ENCODE measurements at regions of chr10 and their contacts with region 1.

Region 1: DNA sequence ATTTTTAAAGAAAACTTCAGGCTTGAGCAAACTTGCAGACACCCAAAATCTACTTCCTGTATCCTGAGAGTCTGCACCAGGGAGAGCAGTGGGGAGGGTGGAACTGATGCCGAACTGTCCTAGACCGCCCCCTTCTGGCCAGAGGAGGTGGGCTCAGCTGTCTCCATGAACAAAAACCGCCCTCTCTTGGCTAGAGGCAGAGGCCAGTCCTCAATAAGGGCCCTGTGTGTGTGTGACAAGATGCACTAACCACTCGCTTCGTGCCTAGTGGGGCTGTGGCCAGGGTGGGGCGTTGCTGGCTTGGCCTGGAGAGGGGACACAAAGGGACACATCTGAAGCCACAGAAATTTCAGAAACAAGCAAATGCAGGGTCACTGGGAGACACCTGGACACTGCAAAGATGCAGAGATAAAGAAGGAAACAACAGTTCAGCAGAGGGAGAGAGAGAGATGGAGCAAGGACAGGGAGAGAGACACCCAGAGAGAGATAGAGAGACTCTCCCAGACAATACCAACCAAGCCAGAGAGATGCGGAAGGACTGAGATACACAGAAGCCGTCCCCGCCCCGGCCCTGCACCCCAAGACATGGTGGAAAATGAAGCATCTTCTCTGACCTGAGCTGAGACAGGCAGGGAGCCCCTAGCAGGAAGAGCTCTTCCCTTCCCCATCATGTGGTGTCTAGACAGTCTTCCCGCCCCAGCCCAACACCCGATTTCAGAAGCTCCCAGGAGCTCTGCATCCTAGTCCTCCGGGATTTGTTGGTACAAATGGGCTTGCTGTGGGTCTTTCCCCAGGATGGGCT is 22.7 kb upstream of the FXYD4 start:
- DNase-seq: peak; percentile 64 to 85
- H3K4me3 ChIP-seq: no peak overlapping the region
- H3K27ac ChIP-seq: no peak overlapping the region
- H3K4me1 ChIP-seq: peaks cover 39% of the 10 kb centered on the region
- H3K27me3 ChIP-seq: no peaks in the 10 kb centered on the region
- CTCF ChIP-seq: peak; percentile 96

Region 2: DNA sequence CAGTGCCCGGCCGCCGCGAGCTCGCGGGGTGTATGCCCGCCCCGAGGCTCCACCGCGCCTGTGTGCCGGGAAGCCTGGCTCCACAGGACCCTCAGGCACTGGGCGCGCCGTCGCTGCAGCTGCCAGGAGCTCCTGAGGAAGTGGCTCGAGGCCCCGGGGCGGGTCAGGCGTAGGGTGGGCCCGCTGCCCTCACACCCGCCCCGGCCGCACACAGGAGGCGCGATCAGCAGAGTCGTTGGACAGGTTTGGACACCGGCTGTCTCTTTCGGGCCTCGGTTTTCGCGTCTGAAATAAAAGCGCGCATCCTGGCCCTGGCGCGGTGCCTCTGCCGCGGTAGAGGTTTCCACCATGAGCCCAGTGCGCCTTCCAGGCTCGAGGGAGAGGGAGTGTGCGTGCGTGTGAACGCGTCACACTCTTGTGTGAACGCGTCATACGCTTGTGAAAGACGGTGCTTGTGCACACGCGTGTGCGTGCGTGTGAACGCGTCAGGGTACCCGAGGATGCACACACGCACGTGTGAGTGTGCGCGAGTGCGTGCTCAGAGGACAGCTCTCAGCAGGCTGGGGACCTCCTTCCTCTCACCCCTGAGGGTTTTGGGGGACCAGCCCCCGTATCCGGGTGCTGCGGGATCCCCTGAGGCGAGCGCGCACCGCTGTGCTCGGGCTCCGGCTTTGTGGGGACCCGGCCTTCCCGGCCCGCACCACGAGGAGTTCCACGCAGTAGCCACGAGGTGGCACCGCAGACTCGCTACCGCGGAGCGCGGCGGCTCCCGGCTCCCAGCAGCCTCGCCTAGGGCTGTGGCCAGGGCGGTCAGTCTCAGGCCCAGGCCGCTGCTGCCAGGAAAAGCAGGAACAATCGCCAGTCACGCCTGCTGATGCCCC is 482.4 kb before region 1 on chr10:
- CTCF ChIA-PET with region 1: no interaction called
- POLR2A ChIA-PET with region 1: no interaction called
- intact Hi-C with region 1: loop called (anchors 2 kb)
- DNase-seq: peak; percentile 55 to 84
- H3K4me3 ChIP-seq: no peak overlapping the region
- H3K27ac ChIP-seq: no peak overlapping the region
- H3K4me1 ChIP-seq: no peaks in the 10 kb centered on the region
- H3K27me3 ChIP-seq: peaks cover 12% of the 10 kb centered on the region; the same call in 1 of the 2 replicates
- CTCF ChIP-seq: peak; percentile 83

Region 3: DNA sequence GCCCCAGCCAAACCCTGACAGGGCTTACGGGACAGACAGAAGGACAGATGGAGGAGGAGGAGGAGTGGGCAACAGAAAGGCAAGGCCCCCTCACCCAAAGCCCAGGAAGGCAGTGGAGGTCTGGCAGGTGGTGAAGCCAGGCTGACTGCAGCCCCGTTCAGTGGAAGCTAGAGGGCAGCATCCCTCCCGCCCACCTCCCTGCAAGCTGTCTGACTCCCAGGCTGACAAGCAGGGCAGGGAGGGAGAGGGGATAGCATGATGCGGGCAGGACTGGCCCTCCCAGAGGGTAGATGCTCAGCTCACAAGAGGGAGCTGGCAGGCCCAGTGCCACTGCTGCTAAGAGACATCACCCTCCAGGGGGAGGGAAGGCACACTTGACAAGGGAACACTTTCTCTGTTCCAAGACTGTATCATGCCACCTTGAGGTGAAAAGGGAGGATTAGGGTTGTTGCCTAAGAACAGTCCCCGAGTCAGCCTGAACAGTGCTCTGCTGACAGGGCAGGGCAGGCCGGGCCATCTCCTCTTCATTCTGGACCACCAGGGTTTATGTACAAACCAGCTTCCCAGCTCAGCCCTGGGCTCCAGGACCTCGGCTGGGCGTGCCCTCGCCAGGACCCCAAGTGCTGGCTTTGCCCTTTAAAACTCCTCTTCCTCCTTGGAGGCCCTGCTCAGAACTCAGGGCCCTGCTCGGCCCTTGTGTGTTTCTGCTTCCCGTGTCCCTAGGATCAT is 143.6 kb before region 1 on chr10:
- CTCF ChIA-PET with region 1: interaction called, 3 read pairs
- POLR2A ChIA-PET with region 1: no interaction called
- intact Hi-C with region 1: loop called (anchors 1 kb)
- DNase-seq: peak; percentile 50 to 66
- H3K4me3 ChIP-seq: no peak overlapping the region
- H3K27ac ChIP-seq: no peak overlapping the region
- H3K4me1 ChIP-seq: no peaks in the 10 kb centered on the region
- H3K27me3 ChIP-seq: no peaks in the 10 kb centered on the region
- CTCF ChIP-seq: peak; percentile 91

Region 4: GRCh38 chr10:43287056-43288007 is 61.4 kb before region 1 on chr10:
- CTCF ChIA-PET with region 1: no interaction called
- POLR2A ChIA-PET with region 1: interaction called, 8 read pairs
- intact Hi-C with region 1: loop called (anchors 1 kb)
- DNase-seq: peak; percentile 87 to 96
- H3K4me3 ChIP-seq: peak overlapping the region; percentile 20; the same call in 1 of the 2 replicates
- H3K27ac ChIP-seq: peak overlapping the region; percentile 75
- H3K4me1 ChIP-seq: peaks cover 22% of the 10 kb centered on the region
- H3K27me3 ChIP-seq: no peaks in the 10 kb centered on the region; the same call in 1 of the 2 replicates
- CTCF ChIP-seq: no peak

Region 5: DNA sequence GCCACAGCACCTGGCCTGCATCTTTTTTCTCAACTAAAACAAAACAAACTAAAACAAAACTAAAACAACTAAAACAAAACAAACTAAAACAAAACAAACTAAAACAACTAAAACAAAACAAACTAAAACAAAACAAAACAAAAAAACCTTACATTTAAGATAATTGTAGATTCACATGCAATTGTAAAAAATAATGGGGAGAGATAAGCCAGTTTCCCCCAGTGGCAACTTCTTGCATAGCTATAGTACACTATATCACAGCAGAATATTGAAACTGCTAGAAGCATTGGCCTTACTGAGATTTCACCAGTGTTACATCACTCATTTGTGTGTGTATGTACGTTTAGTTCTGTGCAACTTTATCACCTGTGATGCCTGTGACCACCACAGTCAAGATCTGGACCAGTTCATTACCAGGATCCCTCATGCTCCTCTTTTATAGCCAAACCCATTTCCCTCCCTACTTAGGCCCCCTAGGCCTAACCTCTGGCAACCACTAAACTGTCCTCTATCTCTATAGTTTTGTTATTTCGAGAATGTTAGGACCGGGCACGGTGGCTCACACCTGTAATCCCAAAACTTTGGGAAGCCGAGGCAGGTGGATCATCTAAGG is 32.0 kb after region 1 on chr10:
- CTCF ChIA-PET with region 1: interaction called, 8 read pairs
- POLR2A ChIA-PET with region 1: no interaction called
- intact Hi-C with region 1: loop called (anchors 1 kb)
- DNase-seq: peak in 1 of 2 experiments; percentile 39
- H3K4me3 ChIP-seq: no peak overlapping the region
- H3K27ac ChIP-seq: peak overlapping the region; percentile 78
- H3K4me1 ChIP-seq: peaks cover 5% of the 10 kb centered on the region
- H3K27me3 ChIP-seq: no peaks in the 10 kb centered on the region
- CTCF ChIP-seq: peak; percentile 46; the same call in 1 of the 2 replicates

Region 6: DNA sequence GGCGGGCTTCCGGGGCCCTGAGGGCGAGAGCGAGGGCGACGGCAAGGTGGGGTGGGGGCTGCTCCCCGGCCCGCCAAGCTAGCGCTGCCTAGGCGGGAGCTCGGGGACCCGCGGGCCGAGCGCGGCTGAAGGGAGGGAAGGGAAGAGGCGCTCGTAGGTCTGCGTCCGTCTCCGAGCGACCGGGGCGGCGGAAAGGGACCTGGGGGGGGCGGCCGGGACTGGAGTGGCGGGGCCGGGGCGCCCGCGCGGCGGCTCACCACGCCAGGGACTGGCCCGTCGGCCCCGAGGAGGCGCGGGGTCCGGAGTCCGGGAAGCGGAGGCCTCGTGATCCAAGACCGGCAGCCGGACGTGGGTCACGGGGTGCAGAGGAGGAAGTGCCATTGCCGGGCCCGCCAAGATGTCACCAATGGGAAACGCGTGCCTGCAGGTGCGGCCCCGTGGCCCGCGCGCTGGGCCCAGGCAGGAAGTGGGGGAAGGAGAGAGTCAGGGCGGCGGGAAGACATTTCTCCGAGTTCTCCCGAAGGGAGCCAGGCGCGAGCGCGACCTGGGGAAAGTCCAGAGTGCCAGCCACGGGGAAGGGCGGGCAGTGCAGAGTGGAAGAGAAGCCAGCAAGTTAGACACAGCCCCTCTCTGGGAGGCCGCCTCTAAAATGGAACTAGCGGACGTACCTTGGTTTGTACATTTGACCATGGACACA is 48.4 kb after region 1 on chr10:
- CTCF ChIA-PET with region 1: no interaction called
- POLR2A ChIA-PET with region 1: no interaction called
- intact Hi-C with region 1: no loop called
- DNase-seq: peak; percentile 86 to 96
- H3K4me3 ChIP-seq: peak overlapping the region; percentile 63
- H3K27ac ChIP-seq: peak overlapping the region; percentile 80
- H3K4me1 ChIP-seq: peaks cover 63% of the 10 kb centered on the region
- H3K27me3 ChIP-seq: no peaks in the 10 kb centered on the region
- CTCF ChIP-seq: no peak

Region 7: GRCh38 chr10:43461950-43462349 is 113.2 kb after region 1 on chr10:
- CTCF ChIA-PET with region 1: no interaction called
- POLR2A ChIA-PET with region 1: no interaction called
- intact Hi-C with region 1: loop called (anchors 2 kb)
- DNase-seq: peak; percentile 25 to 65
- H3K4me3 ChIP-seq: no peak overlapping the region
- H3K27ac ChIP-seq: no peak overlapping the region
- H3K4me1 ChIP-seq: no peaks in the 10 kb centered on the region
- H3K27me3 ChIP-seq: no peaks in the 10 kb centered on the region
- CTCF ChIP-seq: peak; percentile 89